K562 (cell line): ENCODE measurements at regions of chr11 and their contacts with region 1.

Region 1: GRCh38 chr11:65314501-65315203 is at the start of gene CDC42EP2:
- DNase-seq: peak; percentile 92 to 99 (median 97)
- ATAC-seq: peak; percentile 96
- H3K4me3 ChIP-seq: peak within 1 kb of the TSS; percentile 77
- H3K27ac ChIP-seq: peak within 1 kb of the TSS; percentile 64
- H3K4me1 ChIP-seq: peaks cover 16 to 48% of the 10 kb centered on the region in 2 experiments; a peak in 4 of 5 replicates
- H3K27me3 ChIP-seq: no peaks in the 10 kb centered on the region
- CTCF ChIP-seq: no peak; a peak in 1 of 6 replicates
- EP300 ChIP-seq: no peak
- POLR2A ChIP-seq: peak; percentile 79
- RAD21 ChIP-seq: no peak
- polyA plus RNA-seq, gene CDC42EP2: 0.27 to 0.52 TPM

Region 2: DNA sequence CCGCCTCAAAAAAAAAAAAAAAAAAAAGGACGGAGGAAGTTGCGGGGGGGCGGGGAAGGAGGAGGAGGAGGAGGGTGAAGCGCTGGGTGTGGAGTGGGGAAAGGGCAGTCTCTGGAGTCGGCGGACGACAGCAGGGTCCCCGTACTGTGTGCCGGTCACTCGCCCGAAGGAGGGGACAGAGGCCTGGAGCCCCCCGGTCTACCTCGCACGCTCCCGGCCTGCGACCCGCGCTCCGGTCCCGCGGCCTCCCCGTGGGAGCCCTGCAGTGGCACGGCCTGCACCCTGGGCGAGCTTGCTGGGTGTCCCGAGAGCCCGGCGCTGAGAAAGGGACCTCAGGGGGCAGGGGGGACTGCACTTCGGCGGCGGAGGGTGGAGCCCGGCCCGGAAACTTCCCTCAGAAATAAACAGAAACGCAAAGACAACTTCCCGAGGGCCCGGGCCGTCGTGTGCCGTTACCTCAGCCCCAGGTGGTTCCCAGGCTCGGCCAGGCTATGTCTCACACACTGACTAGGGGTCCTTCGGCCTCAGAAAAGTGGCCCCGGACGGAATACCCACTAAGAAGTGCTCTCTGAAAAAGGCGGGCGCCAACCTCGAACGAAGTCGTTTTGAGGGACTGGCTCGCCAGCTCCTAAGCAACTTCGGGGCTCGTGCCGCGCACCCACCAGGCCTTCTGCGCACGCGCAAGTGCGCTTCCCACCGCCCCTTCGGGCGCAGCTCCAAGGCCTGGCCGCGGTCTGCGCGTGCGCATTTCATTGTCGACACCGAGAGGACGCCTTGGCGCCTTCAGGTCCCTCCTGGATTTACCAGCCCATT is 343.0 kb before region 1 on chr11 and contains the start of gene MAJIN:
- CTCF ChIA-PET with region 1: no interaction called
- POLR2A ChIA-PET with region 1: no interaction called
- in situ Hi-C with region 1: no loop called
- intact Hi-C with region 1: no loop called
- DNase-seq: peak; percentile 92 to 95 (median 94)
- ATAC-seq: peak; percentile 93
- H3K4me3 ChIP-seq: 0 out of 2 replicates have a peak within 1 kb of the TSS, but pooled peaks have one; percentile 2
- H3K27ac ChIP-seq: peak within 1 kb of the TSS; percentile 72
- H3K4me1 ChIP-seq: peaks cover 4 to 12% of the 10 kb centered on the region in 2 experiments; a peak in 4 of 5 replicates
- H3K27me3 ChIP-seq: no peaks in the 10 kb centered on the region
- CTCF ChIP-seq: no peak
- EP300 ChIP-seq: no peak
- POLR2A ChIP-seq: 0 out of 2 replicates have a peak, but pooled peaks have one; percentile 32
- RAD21 ChIP-seq: no peak
- polyA plus RNA-seq, gene MAJIN: 0.21 TPM in 1 of 2 experiments, not detected in the other

Region 3: DNA sequence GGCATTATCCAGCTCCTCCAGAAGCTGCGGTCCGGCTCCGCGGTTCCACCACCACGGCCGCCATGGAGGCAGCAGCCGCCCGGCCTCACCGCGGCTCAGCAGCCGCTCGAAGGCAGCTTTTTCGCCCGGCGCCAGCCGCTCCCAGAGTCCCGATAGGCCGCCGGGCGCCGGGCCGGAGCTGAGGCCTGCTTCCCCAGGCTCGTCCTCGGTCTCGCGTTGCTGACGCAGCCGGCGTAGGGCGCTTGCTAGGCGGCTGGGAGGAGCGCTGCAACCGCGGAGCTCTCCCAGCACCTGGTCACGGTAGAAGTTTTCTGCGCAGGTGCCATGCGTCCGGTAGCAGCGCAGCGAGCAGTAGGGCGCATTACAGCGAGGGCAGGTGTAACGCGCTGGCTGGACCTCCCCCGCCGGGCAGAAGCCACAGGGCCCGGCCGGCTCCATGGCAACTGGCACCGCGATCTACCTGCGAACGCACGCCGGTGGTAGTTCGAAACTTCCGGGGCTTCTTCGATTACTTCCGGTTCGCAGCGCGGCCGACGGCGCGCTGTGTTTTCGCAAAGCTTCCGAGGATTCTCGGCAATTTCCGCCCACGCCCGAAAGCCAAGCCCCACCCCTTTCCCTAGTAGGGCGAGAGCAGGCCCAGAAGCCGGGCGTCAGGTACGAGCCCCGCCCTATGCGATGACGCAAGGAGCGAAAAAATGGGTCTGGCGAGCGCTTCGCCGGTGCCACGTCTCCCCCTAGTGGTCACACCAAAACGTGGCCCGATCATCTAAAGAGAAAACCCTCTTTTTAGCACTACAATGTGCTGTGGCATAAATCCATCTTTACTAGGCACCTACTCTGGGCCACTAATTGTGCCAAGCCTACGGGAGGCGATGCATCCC is 197.2 kb before region 1 on chr11 and contains the start of gene ZNHIT2:
- CTCF ChIA-PET with region 1: no interaction called
- POLR2A ChIA-PET with region 1: interaction called, 4 read pairs
- in situ Hi-C with region 1: no loop called
- intact Hi-C with region 1: loop called (anchors 10 kb)
- DNase-seq: peak; percentile 84 to 99 (median 90)
- ATAC-seq: peak; percentile 78
- H3K4me3 ChIP-seq: peak within 1 kb of the TSS; percentile 95
- H3K27ac ChIP-seq: peak within 1 kb of the TSS; percentile 86
- H3K4me1 ChIP-seq: peaks cover 33 to 41% of the 10 kb centered on the region in 2 experiments
- H3K27me3 ChIP-seq: no peaks in the 10 kb centered on the region
- CTCF ChIP-seq: peak; percentile 85 to 97 (median 93)
- EP300 ChIP-seq: peak; percentile 18; the same call in 1 of the 2 replicates
- POLR2A ChIP-seq: peak; percentile 92
- RAD21 ChIP-seq: peak; percentile 84 to 85
- polyA plus RNA-seq, gene ZNHIT2: 0.08 to 0.20 TPM

Region 4: GRCh38 chr11:65212226-65212801 is 102.3 kb before region 1 on chr11:
- CTCF ChIA-PET with region 1: no interaction called
- POLR2A ChIA-PET with region 1: no interaction called
- in situ Hi-C with region 1: no loop called
- intact Hi-C with region 1: no loop called
- DNase-seq: peak in 3 of 4 experiments; percentile 38 to 61 (median 47)
- ATAC-seq: peak; percentile 56
- H3K4me3 ChIP-seq: no peak overlapping the region
- H3K27ac ChIP-seq: no peak overlapping the region
- H3K4me1 ChIP-seq: peaks cover 13 to 53% of the 10 kb centered on the region in 2 experiments; a peak in 4 of 5 replicates
- H3K27me3 ChIP-seq: no peaks in the 10 kb centered on the region
- CTCF ChIP-seq: no peak
- EP300 ChIP-seq: no peak
- POLR2A ChIP-seq: 0 out of 2 replicates have a peak, but pooled peaks have one; percentile 43
- RAD21 ChIP-seq: no peak

Region 5: GRCh38 chr11:65225279-65226102 is 89.2 kb before region 1 on chr11:
- CTCF ChIA-PET with region 1: interaction called, 9 read pairs
- POLR2A ChIA-PET with region 1: no interaction called
- in situ Hi-C with region 1: no loop called
- intact Hi-C with region 1: loop called (anchors 10 kb)
- DNase-seq: peak; percentile 73 to 80 (median 80)
- ATAC-seq: peak; percentile 95
- H3K4me3 ChIP-seq: peak overlapping the region; percentile 31
- H3K27ac ChIP-seq: peak overlapping the region; percentile 65
- H3K4me1 ChIP-seq: peaks cover 14 to 17% of the 10 kb centered on the region in 2 experiments
- H3K27me3 ChIP-seq: no peaks in the 10 kb centered on the region
- CTCF ChIP-seq: peak; percentile 70 to 85 (median 77)
- EP300 ChIP-seq: no peak
- POLR2A ChIP-seq: no peak
- RAD21 ChIP-seq: peak; percentile 69 to 72

Region 6: GRCh38 chr11:65274735-65275682 is 39.6 kb before region 1 on chr11:
- CTCF ChIA-PET with region 1: interaction called, 91 read pairs
- POLR2A ChIA-PET with region 1: interaction called, 19 read pairs
- in situ Hi-C with region 1: no loop called
- intact Hi-C with region 1: loop called (anchors 1 kb)
- DNase-seq: peak; percentile 72 to 92 (median 77)
- ATAC-seq: peak; percentile 97
- H3K4me3 ChIP-seq: no peak overlapping the region
- H3K27ac ChIP-seq: peak overlapping the region; percentile 71
- H3K4me1 ChIP-seq: peaks cover 0 to 9% of the 10 kb centered on the region in 2 experiments; a peak in 3 of 5 replicates
- H3K27me3 ChIP-seq: no peaks in the 10 kb centered on the region
- CTCF ChIP-seq: peak; percentile 86 to 97 (median 88)
- EP300 ChIP-seq: peak; percentile 73
- POLR2A ChIP-seq: no peak
- RAD21 ChIP-seq: peak; percentile 94 to 95

Region 7: GRCh38 chr11:65290448-65291165 is 24.0 kb before region 1 on chr11:
- CTCF ChIA-PET with region 1: interaction called, 7 read pairs
- POLR2A ChIA-PET with region 1: no interaction called
- in situ Hi-C with region 1: no loop called
- intact Hi-C with region 1: loop called (anchors 2 kb)
- DNase-seq: peak; percentile 34 to 56 (median 46)
- ATAC-seq: peak; percentile 84
- H3K4me3 ChIP-seq: no peak overlapping the region
- H3K27ac ChIP-seq: peak overlapping the region; percentile 24; the same call in 1 of the 3 replicates
- H3K4me1 ChIP-seq: peaks cover 2 to 20% of the 10 kb centered on the region in 2 experiments; a peak in 4 of 5 replicates
- H3K27me3 ChIP-seq: no peaks in the 10 kb centered on the region
- CTCF ChIP-seq: no peak
- EP300 ChIP-seq: no peak
- POLR2A ChIP-seq: no peak
- RAD21 ChIP-seq: no peak

Region 8: DNA sequence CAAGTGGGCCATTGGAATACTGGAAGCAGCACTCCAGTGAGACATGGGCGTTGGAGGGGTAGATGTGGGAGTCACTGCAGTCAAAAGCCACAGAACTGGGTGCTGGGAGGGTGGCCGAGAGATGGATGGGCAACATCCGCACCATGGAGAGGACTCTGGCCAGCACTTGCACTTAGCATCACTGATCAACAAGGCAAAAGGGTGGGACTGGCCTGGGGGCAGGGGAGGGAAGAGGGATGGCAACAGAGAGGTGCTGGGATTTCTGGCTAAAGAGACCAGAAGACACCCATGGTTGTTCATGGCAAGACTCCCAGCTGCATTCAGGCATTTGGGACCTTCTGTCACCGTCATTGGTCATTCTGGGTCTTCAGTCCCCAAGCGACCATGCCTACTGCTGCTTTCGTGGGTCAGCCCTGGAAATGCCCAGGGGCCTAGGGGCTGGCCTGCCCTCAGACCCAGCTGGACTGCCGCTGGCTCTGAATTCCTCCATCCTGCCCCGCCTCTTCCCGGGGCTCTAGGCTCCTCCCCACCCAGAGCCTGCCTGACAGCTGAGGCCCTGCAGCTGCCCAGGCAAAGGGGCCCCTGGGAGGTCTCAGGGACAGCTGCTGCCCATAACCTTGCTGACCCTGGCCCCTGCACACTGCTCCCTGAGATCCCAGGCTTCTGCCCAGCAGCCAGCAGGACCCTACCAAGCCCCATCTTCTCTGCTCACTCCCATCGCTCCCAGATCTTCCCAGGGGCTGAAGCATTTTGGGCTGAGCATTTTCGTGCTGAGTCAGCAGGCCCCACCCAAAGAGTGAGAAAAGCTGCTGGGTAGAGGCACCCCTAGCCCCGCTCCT is 12.9 kb before region 1 on chr11:
- CTCF ChIA-PET with region 1: no interaction called
- POLR2A ChIA-PET with region 1: interaction called, 10 read pairs
- in situ Hi-C with region 1: no loop called
- intact Hi-C with region 1: no loop called
- DNase-seq: peak; percentile 49 to 64 (median 60)
- ATAC-seq: peak; percentile 89
- H3K4me3 ChIP-seq: no peak overlapping the region
- H3K27ac ChIP-seq: peak overlapping the region; percentile 23; the same call in 1 of the 3 replicates
- H3K4me1 ChIP-seq: peaks cover 12 to 20% of the 10 kb centered on the region in 2 experiments; a peak in 4 of 5 replicates
- H3K27me3 ChIP-seq: no peaks in the 10 kb centered on the region
- CTCF ChIP-seq: no peak
- EP300 ChIP-seq: no peak
- POLR2A ChIP-seq: no peak
- RAD21 ChIP-seq: no peak

Region 9: GRCh38 chr11:65329944-65330403 is 15.3 kb after region 1 on chr11:
- CTCF ChIA-PET with region 1: interaction called, 6 read pairs
- POLR2A ChIA-PET with region 1: interaction called, 13 read pairs
- in situ Hi-C with region 1: no loop called
- intact Hi-C with region 1: loop called (anchors 2 kb)
- DNase-seq: peak; percentile 52 to 96 (median 64)
- ATAC-seq: peak; percentile 65
- H3K4me3 ChIP-seq: no peak overlapping the region
- H3K27ac ChIP-seq: no peak overlapping the region; the same call in 1 of the 3 replicates
- H3K4me1 ChIP-seq: peaks cover 10 to 11% of the 10 kb centered on the region in 2 experiments; a peak in 4 of 5 replicates
- H3K27me3 ChIP-seq: no peaks in the 10 kb centered on the region
- CTCF ChIP-seq: peak; percentile 78 to 82 (median 80)
- EP300 ChIP-seq: no peak
- POLR2A ChIP-seq: no peak
- RAD21 ChIP-seq: peak; percentile 55 to 74

Region 10: DNA sequence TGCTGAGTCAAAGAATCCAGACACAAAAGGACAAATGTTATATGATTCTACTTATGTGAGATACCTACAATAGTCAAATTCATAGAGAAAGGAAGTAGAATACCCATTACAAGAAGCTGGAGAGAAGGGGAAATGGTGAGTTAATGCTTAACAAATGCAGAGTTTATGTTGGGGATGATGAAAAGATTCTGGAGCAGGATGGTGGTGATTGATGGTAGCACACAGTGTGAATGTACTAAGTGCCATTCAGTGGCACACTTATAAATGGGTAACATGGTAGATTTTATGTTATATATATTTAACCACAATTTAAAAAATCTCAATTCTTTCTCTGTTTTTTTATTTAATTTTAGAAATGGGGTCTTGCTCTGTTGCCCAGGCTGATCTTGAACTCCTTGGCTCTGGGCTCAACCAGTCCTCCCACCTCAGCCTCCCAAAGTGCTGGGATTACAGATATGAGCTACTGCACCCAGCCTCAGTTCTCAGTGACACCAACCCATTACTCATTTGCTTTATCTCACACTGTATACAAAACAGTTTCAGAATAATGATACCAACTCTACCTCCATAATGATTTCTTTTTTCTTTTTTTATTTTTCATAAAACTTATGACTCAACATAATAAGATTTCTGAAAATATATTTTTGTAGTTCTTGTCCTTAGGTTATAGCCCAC is 357.7 kb after region 1 on chr11:
- CTCF ChIA-PET with region 1: no interaction called
- POLR2A ChIA-PET with region 1: no interaction called
- in situ Hi-C with region 1: no loop called
- intact Hi-C with region 1: no loop called
- DNase-seq: no peak
- ATAC-seq: no peak
- H3K4me3 ChIP-seq: no peak overlapping the region
- H3K27ac ChIP-seq: no peak overlapping the region
- H3K4me1 ChIP-seq: no peaks in the 10 kb centered on the region
- H3K27me3 ChIP-seq: no peaks in the 10 kb centered on the region
- CTCF ChIP-seq: no peak
- EP300 ChIP-seq: no peak
- POLR2A ChIP-seq: no peak
- RAD21 ChIP-seq: no peak